ENCODE measurements at regions of chr6 and their contacts with region 1.

Region 1: GRCh38 chr6:52419809-52420670 is at the start of gene EFHC1:
- DNase-seq: peak; percentile 99
- ATAC-seq: peak; percentile 92
- H3K4me3 Mint-ChIP-seq: no peak within 1 kb of the TSS
- H3K27ac Mint-ChIP-seq: peak within 1 kb of the TSS; percentile 44
- H3K4me1 Mint-ChIP-seq: peaks cover 25% of the 10 kb centered on the region
- H3K27me3 Mint-ChIP-seq: peaks cover 3% of the 10 kb centered on the region
- total RNA-seq, gene EFHC1: 4.2 to 5.1 TPM

Region 2: GRCh38 chr6:52304983-52305390 is 115.1 kb before region 1 on chr6:
- POLR2A ChIA-PET with region 1: no interaction called
- DNase-seq: no peak
- ATAC-seq: peak; percentile 21
- H3K4me3 Mint-ChIP-seq: peak overlapping the region; percentile 51
- H3K27ac Mint-ChIP-seq: peak overlapping the region; percentile 81
- H3K4me1 Mint-ChIP-seq: peaks cover 40% of the 10 kb centered on the region
- H3K27me3 Mint-ChIP-seq: no peaks in the 10 kb centered on the region

Region 3: GRCh38 chr6:52399511-52400312 is 20.3 kb before region 1 on chr6:
- POLR2A ChIA-PET with region 1: interaction called, 10 read pairs
- DNase-seq: no peak
- ATAC-seq: peak; percentile 21
- H3K4me3 Mint-ChIP-seq: no peak overlapping the region
- H3K27ac Mint-ChIP-seq: peak overlapping the region; percentile 84
- H3K4me1 Mint-ChIP-seq: peaks cover 52% of the 10 kb centered on the region
- H3K27me3 Mint-ChIP-seq: no peaks in the 10 kb centered on the region

Measured in activated naive CD8-positive, alpha-beta T cell treated with anti-CD3 and anti-CD28 coated beads, Interleukin-2, amount 10 ng/mL, durations not matched to agents 7 days and 5 days (primary cell).